Activated CD8-positive, alpha-beta T cell treated with anti-CD3 and anti-CD28 coated beads, Interleukin-2, amount 10 ng/mL, durations not matched to agents 7 days and 5 days (primary cell): ENCODE measurements at regions of chr14 and their contacts with region 1.

Region 1: GRCh38 chr14:50830932-50831725 is at the start of gene NIN:
- DNase-seq: peak; percentile 78
- ATAC-seq: peak; percentile 90
- H3K4me3 Mint-ChIP-seq: peak within 1 kb of the TSS; percentile 92
- H3K27ac Mint-ChIP-seq: peak within 1 kb of the TSS; percentile 94
- H3K4me1 Mint-ChIP-seq: peaks cover 67% of the 10 kb centered on the region
- H3K27me3 Mint-ChIP-seq: no peaks in the 10 kb centered on the region
- total RNA-seq, gene NIN: 104 TPM

Region 2: DNA sequence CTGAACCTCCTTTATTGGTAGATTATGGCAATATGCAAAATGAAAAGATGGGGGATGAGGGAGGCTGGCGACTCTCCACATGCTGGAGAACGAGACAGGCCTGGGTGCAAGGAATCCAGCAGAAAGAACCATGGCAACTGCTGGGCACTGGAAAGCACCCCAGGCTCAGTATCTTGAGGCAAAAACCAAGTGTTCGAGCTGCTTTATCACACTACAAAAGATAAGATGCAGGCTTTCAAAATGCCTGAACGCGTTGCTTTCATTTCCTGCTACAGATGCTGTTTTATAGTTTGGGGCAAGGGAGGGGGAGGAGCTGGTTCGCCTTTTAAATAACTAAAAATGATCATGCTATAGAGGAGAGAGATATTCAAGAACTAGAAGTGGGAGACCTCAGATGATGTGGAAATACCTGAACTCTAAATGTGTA is 39.1 kb before region 1 on chr14:
- CTCF ChIA-PET with region 1: interaction called, 8 read pairs
- POLR2A ChIA-PET with region 1: interaction called, 14 read pairs
- DNase-seq: peak; percentile 39
- ATAC-seq: peak; percentile 57
- H3K4me3 Mint-ChIP-seq: peak overlapping the region; percentile 67
- H3K27ac Mint-ChIP-seq: peak overlapping the region; percentile 93
- H3K4me1 Mint-ChIP-seq: peaks cover 65% of the 10 kb centered on the region
- H3K27me3 Mint-ChIP-seq: no peaks in the 10 kb centered on the region